AG04450 (cell line): ENCODE measurements at regions of chr2 and their contacts with region 1.

Region 1: GRCh38 chr2:202541137-202541536 is 93.6 kb upstream of the FAM117B start:
- DNase-seq: no peak
- H3K4me3 ChIP-seq: no peak overlapping the region
- H3K27ac ChIP-seq: no peak overlapping the region
- H3K27me3 ChIP-seq: no peaks in the 10 kb centered on the region
- CTCF ChIP-seq: no peak

Region 2: GRCh38 chr2:202529389-202529788 is 11.7 kb before region 1 on chr2:
- CTCF ChIA-PET with region 1: no interaction called
- POLR2A ChIA-PET with region 1: interaction called, 10 read pairs
- DNase-seq: peak; percentile 37
- H3K4me3 ChIP-seq: no peak overlapping the region
- H3K27ac ChIP-seq: no peak overlapping the region
- H3K27me3 ChIP-seq: no peaks in the 10 kb centered on the region
- CTCF ChIP-seq: no peak

Region 3: DNA sequence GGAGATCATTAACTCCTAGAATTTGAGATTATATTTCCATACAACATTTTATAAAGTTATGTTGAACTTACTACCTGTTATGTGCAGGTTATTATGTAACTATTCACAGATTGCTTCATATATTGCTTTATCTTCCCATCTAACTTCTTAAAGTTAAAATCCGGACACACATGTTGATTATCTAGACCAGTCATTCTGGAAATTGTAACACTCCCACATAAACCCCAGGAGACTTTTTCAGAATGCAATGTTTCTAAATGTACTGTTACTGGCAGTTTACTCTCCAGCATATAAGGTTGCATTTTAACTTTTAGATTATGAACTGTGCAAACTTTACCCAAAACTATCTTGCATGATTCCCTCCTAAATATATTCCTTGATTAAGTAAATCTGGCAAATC is 23.1 kb after region 1 on chr2:
- CTCF ChIA-PET with region 1: interaction called, 10 read pairs
- POLR2A ChIA-PET with region 1: no interaction called
- DNase-seq: no peak
- H3K4me3 ChIP-seq: no peak overlapping the region
- H3K27ac ChIP-seq: no peak overlapping the region
- H3K27me3 ChIP-seq: no peaks in the 10 kb centered on the region
- CTCF ChIP-seq: no peak